ENCODE measurements at regions of chr11 and their contacts with region 1.

Region 1: DNA sequence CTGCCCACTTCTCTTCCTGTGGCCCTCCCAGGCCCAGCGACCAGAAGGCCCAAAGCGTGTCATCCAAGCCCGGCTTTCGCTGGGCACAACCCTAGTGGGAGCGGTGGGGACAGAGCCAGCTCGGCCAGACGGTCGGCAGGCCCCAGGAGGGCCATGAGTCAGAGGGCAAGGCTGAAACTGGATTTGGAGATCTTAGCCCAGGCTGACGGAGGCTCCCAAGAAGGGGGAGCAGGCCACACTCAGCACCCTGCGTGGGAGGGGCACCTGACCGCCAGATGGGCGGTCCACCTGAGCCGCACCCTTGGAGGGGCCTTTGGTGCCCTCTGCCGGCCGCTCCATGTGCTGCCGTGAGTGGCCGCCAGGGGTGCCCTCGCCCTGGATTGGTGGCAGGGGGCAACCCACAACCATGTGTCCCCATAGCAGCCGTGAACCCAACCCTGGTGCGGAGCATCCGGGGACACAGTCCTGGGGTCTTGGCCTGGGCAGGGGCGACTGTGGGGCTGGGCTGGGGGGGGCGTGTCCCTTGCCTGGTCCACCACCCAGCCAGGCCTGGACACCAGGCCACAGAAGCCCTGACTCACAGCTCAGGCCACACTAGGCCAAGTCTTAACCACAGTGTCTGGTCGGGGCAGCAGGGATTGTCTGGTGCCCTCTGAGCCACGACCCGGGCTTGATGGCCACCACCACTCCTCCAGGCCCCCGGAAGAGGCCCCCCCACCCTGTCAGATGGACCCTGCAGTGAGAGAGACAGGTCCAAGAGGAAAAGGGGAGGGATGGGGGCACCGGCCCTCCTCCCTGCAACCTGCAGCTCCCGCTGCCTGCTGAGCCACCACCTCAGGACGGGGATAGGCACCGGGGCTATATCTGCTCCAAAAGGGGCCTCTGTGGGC is 19.2 kb upstream of the TALDO1 start:
- DNase-seq: peak; percentile 97
- H3K4me3 ChIP-seq: no peak overlapping the region
- H3K27ac ChIP-seq: peak overlapping the region; percentile 68 to 80 (median 75)
- H3K4me1 ChIP-seq: peaks cover 23 to 34% of the 10 kb centered on the region in 2 donors
- H3K27me3 ChIP-seq: no peaks in the 10 kb centered on the region
- CTCF ChIP-seq: peak; percentile 96 to 100 (median 99)
- POLR2A ChIP-seq: peak in 1 of 2 donors; percentile 56

Region 2: DNA sequence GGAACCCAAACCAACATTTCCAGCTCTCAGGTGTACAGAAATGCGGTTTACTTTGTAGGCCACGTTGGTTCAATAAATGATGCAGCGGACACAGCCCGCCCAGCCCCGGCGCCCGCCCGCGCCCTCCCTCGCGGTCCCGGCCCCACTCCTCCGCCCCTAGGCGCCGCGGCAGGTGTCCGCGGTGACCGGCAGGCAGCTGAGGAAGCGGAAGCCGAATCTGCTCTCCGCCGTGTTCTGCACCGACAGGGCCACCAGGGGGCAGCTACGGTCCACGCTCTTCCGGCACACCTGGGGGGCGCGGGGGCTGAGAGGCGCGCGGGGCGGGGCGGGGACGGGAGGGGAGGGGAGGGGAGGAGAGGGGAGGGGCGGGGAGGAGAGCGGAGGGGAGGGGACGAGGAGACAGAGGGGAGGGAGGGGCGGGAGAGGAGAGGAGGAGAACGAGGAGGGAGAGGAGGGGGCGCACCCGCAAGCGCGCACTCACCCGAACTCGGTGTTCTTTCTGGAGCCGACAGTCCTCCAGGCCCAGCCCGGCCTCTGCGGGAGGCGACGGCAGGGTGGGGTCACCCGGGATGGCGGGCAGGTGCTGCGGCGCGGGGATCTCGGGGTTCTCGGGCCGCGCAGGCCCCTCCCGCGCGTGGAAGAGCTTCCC is 173.2 kb before region 1 on chr11:
- intact Hi-C with region 1: loop called (anchors 5 kb)
- DNase-seq: peak; percentile 71 to 82
- H3K4me3 ChIP-seq: peak overlapping the region in 2 of 3 donors; percentile 25 to 37
- H3K27ac ChIP-seq: no peak overlapping the region
- H3K4me1 ChIP-seq: peaks cover 15 to 28% of the 10 kb centered on the region in 2 donors
- H3K27me3 ChIP-seq: no peaks in the 10 kb centered on the region
- CTCF ChIP-seq: peak; percentile 17 to 74 (median 60)
- POLR2A ChIP-seq: no peak

Region 3: DNA sequence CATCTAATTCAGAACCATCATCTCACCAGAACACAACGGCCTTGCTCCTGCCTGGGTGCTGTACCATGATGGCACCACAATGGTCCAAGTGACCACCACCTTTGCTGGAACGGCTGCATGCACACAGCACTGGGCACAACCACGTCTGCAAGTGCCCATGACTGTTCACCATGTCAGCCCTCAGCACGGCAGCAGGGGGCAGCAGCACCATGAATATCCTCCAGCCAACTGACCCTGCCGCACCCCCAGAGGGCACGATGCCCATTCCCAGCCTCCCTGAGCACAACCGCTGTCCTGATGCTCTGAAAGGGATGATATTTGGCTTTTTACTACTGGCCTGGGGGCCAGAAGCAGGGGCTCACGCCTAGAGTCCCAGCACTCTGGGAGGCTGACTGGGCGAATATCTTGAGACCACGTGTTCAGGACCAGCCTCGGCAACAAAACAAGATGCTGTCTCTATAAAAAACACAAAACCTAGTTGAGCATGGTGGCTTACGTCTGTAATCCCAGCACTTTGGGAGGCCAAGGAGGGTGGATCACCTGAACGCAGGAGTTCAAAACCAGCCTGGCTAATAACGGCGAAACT is 65.3 kb before region 1 on chr11:
- intact Hi-C with region 1: loop called (anchors 10 kb)
- DNase-seq: peak; percentile 66 to 74
- H3K4me3 ChIP-seq: no peak overlapping the region
- H3K27ac ChIP-seq: no peak overlapping the region
- H3K4me1 ChIP-seq: peaks cover 0 to 3% of the 10 kb centered on the region in 2 donors
- H3K27me3 ChIP-seq: no peaks in the 10 kb centered on the region
- CTCF ChIP-seq: peak; percentile 28 to 81 (median 68)
- POLR2A ChIP-seq: no peak

Measured in thyroid gland (tissue), 4 donors.